ENCODE measurements at regions of chr2 and their contacts with region 1.

Region 1: GRCh38 chr2:156892467-156893281 is 364.8 kb upstream of the GALNT5 start:
- DNase-seq: peak in 1 of 2 experiments; percentile 55
- H3K4me3 ChIP-seq: peak overlapping the region; percentile 36
- H3K4me3 Mint-ChIP-seq: peak overlapping the region; percentile 66
- H3K27ac Mint-ChIP-seq: no peak overlapping the region
- H3K4me1 ChIP-seq: no peaks in the 10 kb centered on the region
- H3K4me1 Mint-ChIP-seq: peaks cover 10% of the 10 kb centered on the region
- H3K27me3 ChIP-seq: no peaks in the 10 kb centered on the region
- H3K27me3 Mint-ChIP-seq: peaks cover 2% of the 10 kb centered on the region
- CTCF ChIP-seq: peak; percentile 58 to 71

Region 2: DNA sequence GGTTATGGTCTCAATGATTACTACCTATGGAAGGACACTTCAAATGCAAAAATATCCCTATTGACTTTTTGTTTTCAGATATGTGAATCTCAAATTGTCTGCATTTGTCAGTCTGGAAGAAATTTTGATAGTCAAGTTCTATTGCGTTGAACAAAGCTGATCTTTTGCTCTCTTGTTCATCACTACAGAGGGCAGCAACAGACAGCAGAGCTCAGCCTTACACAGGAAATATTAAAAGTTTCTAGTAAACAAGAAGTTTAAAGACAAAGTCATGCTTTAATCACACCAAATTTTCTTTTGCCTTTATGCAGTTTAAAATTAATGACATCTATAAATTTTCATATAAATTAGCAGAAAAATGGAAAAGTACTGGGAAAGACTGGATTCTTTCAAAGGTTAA is 1177.7 kb before region 1 on chr2:
- CTCF ChIA-PET with region 1: no interaction called
- POLR2A ChIA-PET with region 1: no interaction called
- intact Hi-C with region 1: loop called (anchors 10 kb)
- DNase-seq: no peak
- H3K4me3 ChIP-seq: no peak overlapping the region
- H3K4me3 Mint-ChIP-seq: no peak overlapping the region
- H3K27ac Mint-ChIP-seq: no peak overlapping the region
- H3K4me1 ChIP-seq: no peaks in the 10 kb centered on the region
- H3K4me1 Mint-ChIP-seq: no peaks in the 10 kb centered on the region
- H3K27me3 ChIP-seq: no peaks in the 10 kb centered on the region
- H3K27me3 Mint-ChIP-seq: no peaks in the 10 kb centered on the region
- CTCF ChIP-seq: no peak

Region 3: DNA sequence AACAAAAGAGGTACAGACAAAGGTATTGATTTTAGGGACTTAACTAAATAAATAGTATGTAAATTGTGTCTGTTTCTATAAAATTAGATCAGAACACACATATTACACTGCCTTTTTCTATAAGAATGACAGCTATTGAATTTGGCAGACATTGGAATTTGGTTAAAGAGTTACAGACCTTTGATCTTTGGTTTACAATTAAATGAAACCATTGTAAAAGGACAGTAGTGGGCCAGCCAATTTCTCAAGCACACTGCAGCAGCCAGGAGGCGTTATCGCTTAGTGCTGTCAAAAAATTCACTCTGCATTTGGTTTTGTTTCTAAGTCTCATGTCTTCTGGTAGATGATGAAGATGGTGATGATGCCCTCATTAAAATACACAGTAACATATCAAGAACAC is 736.1 kb before region 1 on chr2:
- CTCF ChIA-PET with region 1: no interaction called
- POLR2A ChIA-PET with region 1: no interaction called
- intact Hi-C with region 1: loop called (anchors 10 kb)
- DNase-seq: no peak
- H3K4me3 ChIP-seq: no peak overlapping the region
- H3K4me3 Mint-ChIP-seq: no peak overlapping the region
- H3K27ac Mint-ChIP-seq: no peak overlapping the region
- H3K4me1 ChIP-seq: no peaks in the 10 kb centered on the region
- H3K4me1 Mint-ChIP-seq: peaks cover 8% of the 10 kb centered on the region
- H3K27me3 ChIP-seq: no peaks in the 10 kb centered on the region
- H3K27me3 Mint-ChIP-seq: no peaks in the 10 kb centered on the region
- CTCF ChIP-seq: peak in 1 of 2 experiments; percentile 25

Region 4: GRCh38 chr2:156538083-156538504 is 354.6 kb before region 1 on chr2:
- CTCF ChIA-PET with region 1: no interaction called
- POLR2A ChIA-PET with region 1: no interaction called
- intact Hi-C with region 1: loop called (anchors 5 kb)
- DNase-seq: no peak
- H3K4me3 ChIP-seq: no peak overlapping the region
- H3K4me3 Mint-ChIP-seq: no peak overlapping the region
- H3K27ac Mint-ChIP-seq: no peak overlapping the region
- H3K4me1 ChIP-seq: peaks cover 9% of the 10 kb centered on the region; the same call in 1 of the 2 replicates
- H3K4me1 Mint-ChIP-seq: peaks cover 8% of the 10 kb centered on the region
- H3K27me3 ChIP-seq: no peaks in the 10 kb centered on the region
- H3K27me3 Mint-ChIP-seq: no peaks in the 10 kb centered on the region
- CTCF ChIP-seq: no peak

Region 5: GRCh38 chr2:156784020-156784701 is 108.5 kb before region 1 on chr2:
- CTCF ChIA-PET with region 1: no interaction called
- POLR2A ChIA-PET with region 1: no interaction called
- intact Hi-C with region 1: loop called (anchors 1 kb)
- DNase-seq: no peak
- H3K4me3 ChIP-seq: no peak overlapping the region
- H3K4me3 Mint-ChIP-seq: no peak overlapping the region
- H3K27ac Mint-ChIP-seq: no peak overlapping the region
- H3K4me1 ChIP-seq: peaks cover 12% of the 10 kb centered on the region
- H3K4me1 Mint-ChIP-seq: peaks cover 25% of the 10 kb centered on the region
- H3K27me3 ChIP-seq: no peaks in the 10 kb centered on the region
- H3K27me3 Mint-ChIP-seq: no peaks in the 10 kb centered on the region
- CTCF ChIP-seq: no peak

Region 6: GRCh38 chr2:156803248-156803647 is 89.4 kb before region 1 on chr2:
- CTCF ChIA-PET with region 1: no interaction called
- POLR2A ChIA-PET with region 1: no interaction called
- intact Hi-C with region 1: no loop called
- DNase-seq: no peak
- H3K4me3 ChIP-seq: no peak overlapping the region
- H3K4me3 Mint-ChIP-seq: no peak overlapping the region
- H3K27ac Mint-ChIP-seq: no peak overlapping the region
- H3K4me1 ChIP-seq: no peaks in the 10 kb centered on the region
- H3K4me1 Mint-ChIP-seq: no peaks in the 10 kb centered on the region
- H3K27me3 ChIP-seq: no peaks in the 10 kb centered on the region
- H3K27me3 Mint-ChIP-seq: no peaks in the 10 kb centered on the region
- CTCF ChIP-seq: no peak

Region 7: DNA sequence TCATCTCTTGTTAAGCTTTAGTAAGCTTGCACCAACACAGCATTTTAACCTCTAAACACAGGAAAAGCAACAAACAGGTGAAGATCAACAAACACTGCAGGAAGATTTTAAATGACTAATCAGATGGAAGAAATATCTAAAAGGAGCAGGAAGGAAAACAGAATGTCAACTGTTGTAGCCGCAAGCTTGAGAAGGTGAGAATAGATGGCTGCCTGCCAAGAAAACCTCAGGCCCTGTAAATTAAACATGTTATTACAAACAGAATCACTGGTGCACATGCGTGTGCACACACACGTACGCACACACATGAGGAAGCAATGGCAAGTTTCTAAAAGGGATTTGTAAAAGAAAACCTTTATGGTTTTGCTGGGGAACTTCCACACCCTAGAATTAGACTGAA is 107.0 kb after region 1 on chr2:
- CTCF ChIA-PET with region 1: no interaction called
- POLR2A ChIA-PET with region 1: no interaction called
- intact Hi-C with region 1: no loop called
- DNase-seq: no peak
- H3K4me3 ChIP-seq: no peak overlapping the region
- H3K4me3 Mint-ChIP-seq: no peak overlapping the region
- H3K27ac Mint-ChIP-seq: no peak overlapping the region
- H3K4me1 ChIP-seq: no peaks in the 10 kb centered on the region
- H3K4me1 Mint-ChIP-seq: no peaks in the 10 kb centered on the region
- H3K27me3 ChIP-seq: no peaks in the 10 kb centered on the region
- H3K27me3 Mint-ChIP-seq: no peaks in the 10 kb centered on the region
- CTCF ChIP-seq: no peak